B cell (primary cell): ENCODE measurements at regions of chr18 and their contacts with region 1.

Region 1: GRCh38 chr18:48951448-48952286 is 902 bp upstream of the SMAD7 start:
- DNase-seq: peak; percentile 91
- ATAC-seq: peak; percentile 46
- H3K4me3 ChIP-seq: peak overlapping the region; percentile 62 to 96 (median 75)
- H3K4me3 Mint-ChIP-seq: peak overlapping the region; percentile 90
- H3K27ac ChIP-seq: peak overlapping the region; percentile 86 to 100
- H3K27ac Mint-ChIP-seq: peak overlapping the region; percentile 99
- H3K4me1 ChIP-seq: peaks cover 24 to 37% of the 10 kb centered on the region in 2 donors
- H3K4me1 Mint-ChIP-seq: peaks cover 29% of the 10 kb centered on the region
- H3K27me3 ChIP-seq: peaks cover 0 to 2% (median 0%) of the 10 kb centered on the region in 4 experiments
- H3K27me3 Mint-ChIP-seq: no peaks in the 10 kb centered on the region
- CTCF ChIP-seq: no peak

Region 2: DNA sequence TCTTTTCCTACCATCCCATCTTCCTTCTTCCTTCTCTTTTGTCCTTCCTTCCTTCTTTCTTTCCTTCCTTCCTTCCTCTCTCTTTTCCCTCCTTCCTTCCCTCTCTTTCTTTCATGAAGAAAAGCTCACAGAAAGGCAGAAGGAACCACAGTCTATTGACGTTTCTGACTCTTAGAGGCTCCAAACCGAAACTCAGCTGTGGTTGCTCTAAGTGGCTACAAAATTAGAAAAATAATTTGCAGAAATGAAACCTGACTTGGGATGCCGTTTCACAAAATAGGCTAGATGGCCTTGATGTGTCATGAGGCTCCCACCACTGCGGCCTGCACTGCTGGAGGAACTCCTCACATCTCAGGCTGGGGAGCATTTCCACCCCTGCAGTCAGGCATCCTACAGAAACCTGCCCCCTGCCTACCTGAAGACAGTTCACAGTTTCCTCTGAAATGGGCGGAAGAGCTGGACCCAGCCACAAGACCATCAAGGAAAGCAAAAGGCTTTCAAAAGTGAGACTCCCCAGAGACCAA is 166.5 kb before region 1 on chr18:
- CTCF ChIA-PET with region 1: interaction called, 8 read pairs
- POLR2A ChIA-PET with region 1: interaction called, 4 read pairs
- intact Hi-C with region 1: loop called (anchors 1 kb)
- DNase-seq: peak; percentile 86
- ATAC-seq: peak; percentile 91
- H3K4me3 ChIP-seq: peak overlapping the region in 1 of 5 experiments; percentile 15
- H3K4me3 Mint-ChIP-seq: peak overlapping the region; percentile 50
- H3K27ac ChIP-seq: peak overlapping the region; percentile 44 to 70
- H3K27ac Mint-ChIP-seq: peak overlapping the region; percentile 64
- H3K4me1 ChIP-seq: peaks cover 57 to 70% of the 10 kb centered on the region in 2 donors
- H3K4me1 Mint-ChIP-seq: peaks cover 57% of the 10 kb centered on the region
- H3K27me3 ChIP-seq: no peaks in the 10 kb centered on the region
- H3K27me3 Mint-ChIP-seq: no peaks in the 10 kb centered on the region
- CTCF ChIP-seq: no peak

Region 3: GRCh38 chr18:48879008-48879431 is 72.6 kb before region 1 on chr18:
- CTCF ChIA-PET with region 1: no interaction called
- POLR2A ChIA-PET with region 1: interaction called, 12 read pairs
- intact Hi-C with region 1: no loop called
- DNase-seq: no peak
- ATAC-seq: no peak
- H3K4me3 ChIP-seq: no peak overlapping the region
- H3K4me3 Mint-ChIP-seq: no peak overlapping the region
- H3K27ac ChIP-seq: no peak overlapping the region
- H3K27ac Mint-ChIP-seq: no peak overlapping the region
- H3K4me1 ChIP-seq: no peaks in the 10 kb centered on the region
- H3K4me1 Mint-ChIP-seq: no peaks in the 10 kb centered on the region
- H3K27me3 ChIP-seq: peaks cover 0 to 2% (median 0%) of the 10 kb centered on the region in 4 experiments
- H3K27me3 Mint-ChIP-seq: peaks cover 4% of the 10 kb centered on the region
- CTCF ChIP-seq: no peak

Region 4: GRCh38 chr18:48902856-48903601 is 48.6 kb before region 1 on chr18:
- CTCF ChIA-PET with region 1: no interaction called
- POLR2A ChIA-PET with region 1: no interaction called
- intact Hi-C with region 1: no loop called
- DNase-seq: no peak
- ATAC-seq: no peak
- H3K4me3 ChIP-seq: no peak overlapping the region
- H3K4me3 Mint-ChIP-seq: no peak overlapping the region
- H3K27ac ChIP-seq: no peak overlapping the region
- H3K27ac Mint-ChIP-seq: no peak overlapping the region
- H3K4me1 ChIP-seq: no peaks in the 10 kb centered on the region
- H3K4me1 Mint-ChIP-seq: peaks cover 2% of the 10 kb centered on the region
- H3K27me3 ChIP-seq: no peaks in the 10 kb centered on the region
- H3K27me3 Mint-ChIP-seq: peaks cover 6% of the 10 kb centered on the region
- CTCF ChIP-seq: no peak

Region 5: DNA sequence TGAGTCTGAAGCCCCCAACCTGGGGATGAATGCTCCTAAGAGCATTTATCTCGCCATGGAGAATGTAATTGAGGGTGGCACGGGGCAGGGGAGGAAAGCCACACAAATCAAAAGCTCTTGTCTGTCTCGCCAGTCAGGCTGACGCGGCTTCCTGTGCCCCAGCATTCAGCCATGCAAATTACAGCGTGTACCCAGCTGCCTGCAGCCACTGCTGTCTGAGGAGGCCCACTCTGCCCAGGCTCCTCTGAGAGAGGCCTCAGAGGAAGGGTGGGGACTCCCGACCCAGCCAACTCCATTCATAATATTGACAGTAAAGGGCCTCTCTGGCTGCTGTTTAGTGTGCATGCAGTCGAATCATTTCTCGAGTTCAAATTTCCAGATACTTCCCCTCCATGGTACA is 22.9 kb before region 1 on chr18:
- CTCF ChIA-PET with region 1: interaction called, 14 read pairs
- POLR2A ChIA-PET with region 1: interaction called, 20 read pairs
- intact Hi-C with region 1: loop called (anchors 1 kb)
- DNase-seq: peak; percentile 91
- ATAC-seq: peak; percentile 92
- H3K4me3 ChIP-seq: peak overlapping the region in 4 of 5 experiments; percentile 13 to 41 (median 28)
- H3K4me3 Mint-ChIP-seq: peak overlapping the region; percentile 64
- H3K27ac ChIP-seq: peak overlapping the region; percentile 41 to 93
- H3K27ac Mint-ChIP-seq: peak overlapping the region; percentile 90
- H3K4me1 ChIP-seq: peaks cover 71 to 89% of the 10 kb centered on the region in 2 donors
- H3K4me1 Mint-ChIP-seq: peaks cover 91% of the 10 kb centered on the region
- H3K27me3 ChIP-seq: no peaks in the 10 kb centered on the region
- H3K27me3 Mint-ChIP-seq: no peaks in the 10 kb centered on the region
- CTCF ChIP-seq: no peak

Region 6: DNA sequence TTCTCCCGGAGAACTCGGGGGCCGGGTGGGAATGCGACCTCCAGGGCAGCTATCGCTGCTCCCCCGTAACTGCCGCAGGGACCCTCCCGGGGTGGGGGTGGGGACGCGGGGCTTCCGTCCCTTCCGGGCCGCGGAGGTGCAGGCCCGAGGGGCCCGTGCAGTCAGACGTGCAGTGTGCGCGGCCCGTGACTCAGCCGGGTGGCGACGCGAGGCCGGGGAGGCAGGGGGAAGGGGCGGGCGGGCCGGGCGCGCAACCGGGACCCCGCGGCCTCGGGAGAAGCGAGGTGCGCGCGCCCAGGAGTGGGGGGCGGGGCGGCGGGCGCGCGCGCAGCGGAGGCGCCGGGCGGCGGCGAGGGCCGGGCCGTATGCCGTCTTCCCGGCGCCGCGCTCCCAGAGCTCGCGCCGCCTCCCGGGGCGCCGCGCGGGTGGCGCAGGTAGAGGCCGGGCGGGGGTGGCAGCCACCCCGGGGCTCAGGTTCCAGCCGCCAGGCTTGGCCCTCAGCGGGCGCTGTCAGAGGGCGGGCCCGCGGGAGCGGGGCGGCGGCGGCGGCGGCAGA is 24.1 kb after region 1 on chr18:
- CTCF ChIA-PET with region 1: interaction called, 4 read pairs
- POLR2A ChIA-PET with region 1: no interaction called
- intact Hi-C with region 1: loop called (anchors 2 kb)
- DNase-seq: peak; percentile 63
- ATAC-seq: peak; percentile 75
- H3K4me3 ChIP-seq: peak overlapping the region in 4 of 5 experiments; percentile 33 to 71 (median 54)
- H3K4me3 Mint-ChIP-seq: peak overlapping the region; percentile 86
- H3K27ac ChIP-seq: no peak overlapping the region
- H3K27ac Mint-ChIP-seq: no peak overlapping the region
- H3K4me1 ChIP-seq: peaks cover 14 to 16% of the 10 kb centered on the region in 2 donors
- H3K4me1 Mint-ChIP-seq: peaks cover 13% of the 10 kb centered on the region
- H3K27me3 ChIP-seq: peaks cover 0 to 36% (median 12%) of the 10 kb centered on the region in 4 experiments
- H3K27me3 Mint-ChIP-seq: peaks cover 29% of the 10 kb centered on the region
- CTCF ChIP-seq: no peak

Region 7: DNA sequence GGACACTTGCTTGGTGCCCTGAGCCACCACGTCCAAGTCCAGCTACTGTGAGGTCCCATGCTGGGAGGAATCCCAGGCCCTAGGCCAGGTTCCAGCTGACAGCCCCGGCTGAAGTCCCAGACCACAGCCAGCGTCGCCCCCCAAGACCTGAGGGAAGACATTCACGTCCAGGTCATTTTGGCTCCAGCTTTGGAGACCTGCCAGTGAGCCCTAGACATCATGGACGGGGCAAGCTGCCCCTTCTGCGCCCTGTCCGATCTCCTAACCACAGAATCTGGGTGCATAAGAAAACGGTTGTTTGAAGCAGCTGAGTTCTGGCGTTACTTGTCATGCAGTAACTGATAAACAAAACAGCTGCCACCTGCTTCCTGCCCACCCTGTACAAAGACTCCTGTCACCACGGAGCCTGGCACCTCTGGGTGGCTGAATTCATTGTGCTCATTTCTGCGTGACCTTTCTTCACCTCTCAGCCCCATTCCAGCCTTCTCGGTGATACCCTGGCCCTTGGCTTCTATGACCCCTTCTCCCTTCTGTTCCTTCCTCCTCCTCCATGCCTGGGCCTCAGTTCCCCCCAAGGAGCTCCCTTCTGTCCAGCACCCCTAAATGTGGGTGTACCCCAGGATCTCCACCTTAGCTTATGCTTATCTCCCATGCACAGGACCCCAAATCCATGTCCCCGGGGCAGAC is 71.7 kb after region 1 on chr18:
- CTCF ChIA-PET with region 1: interaction called, 5 read pairs
- POLR2A ChIA-PET with region 1: interaction called, 15 read pairs
- intact Hi-C with region 1: no loop called
- DNase-seq: peak; percentile 77
- ATAC-seq: peak; percentile 83
- H3K4me3 ChIP-seq: peak overlapping the region in 2 of 5 experiments; percentile 9
- H3K4me3 Mint-ChIP-seq: peak overlapping the region; percentile 74
- H3K27ac ChIP-seq: peak overlapping the region; percentile 18 to 53
- H3K27ac Mint-ChIP-seq: peak overlapping the region; percentile 84
- H3K4me1 ChIP-seq: peaks cover 41 to 43% of the 10 kb centered on the region in 2 donors
- H3K4me1 Mint-ChIP-seq: peaks cover 42% of the 10 kb centered on the region
- H3K27me3 ChIP-seq: peaks cover 0 to 4% (median 1%) of the 10 kb centered on the region in 4 experiments
- H3K27me3 Mint-ChIP-seq: no peaks in the 10 kb centered on the region
- CTCF ChIP-seq: no peak